CD4-positive, alpha-beta memory T cell (primary cell): ENCODE measurements at regions of chr17 and their contacts with region 1.

Region 1: GRCh38 chr17:18960803-18961511 is 9.0 kb downstream of the SLC5A10 start:
- DNase-seq: peak; percentile 45 to 64 (median 52)
- H3K4me3 ChIP-seq: no peak overlapping the region
- H3K4me3 Mint-ChIP-seq: peak overlapping the region in 1 of 8 donors; percentile 8
- H3K27ac ChIP-seq: no peak overlapping the region
- H3K27ac Mint-ChIP-seq: peak overlapping the region in 2 of 7 donors; percentile 8 to 24
- H3K4me1 ChIP-seq: peaks cover 23% of the 10 kb centered on the region
- H3K4me1 Mint-ChIP-seq: peaks cover 12 to 49% (median 19%) of the 10 kb centered on the region in 4 donors
- H3K27me3 ChIP-seq: no peaks in the 10 kb centered on the region
- H3K27me3 Mint-ChIP-seq: no peaks in the 10 kb centered on the region

Region 2: DNA sequence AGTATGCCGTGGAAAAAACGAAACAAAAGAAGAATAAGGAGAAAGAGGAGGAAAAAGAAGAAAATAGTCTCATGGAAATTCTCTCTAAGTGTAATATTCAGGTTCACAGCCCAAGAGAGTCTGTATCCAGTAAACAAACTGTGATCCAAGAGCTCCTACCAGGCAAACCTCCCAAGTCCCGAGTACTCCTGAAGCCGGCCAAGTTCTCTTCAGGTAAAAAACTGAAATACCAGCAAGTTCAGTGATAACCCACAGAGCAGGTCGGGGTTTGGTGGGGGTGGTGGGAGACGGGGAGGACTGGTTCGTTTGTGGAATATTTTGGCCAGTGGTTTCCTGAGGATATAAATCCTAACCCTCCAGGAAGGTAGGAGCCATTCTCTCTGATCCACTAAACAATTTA is 188.5 kb before region 1 on chr17:
- CTCF ChIA-PET with region 1: no interaction called
- POLR2A ChIA-PET with region 1: no interaction called
- intact Hi-C with region 1: no loop called
- DNase-seq: no peak
- H3K4me3 ChIP-seq: no peak overlapping the region
- H3K4me3 Mint-ChIP-seq: no peak overlapping the region
- H3K27ac ChIP-seq: no peak overlapping the region
- H3K27ac Mint-ChIP-seq: no peak overlapping the region
- H3K4me1 ChIP-seq: no peaks in the 10 kb centered on the region
- H3K4me1 Mint-ChIP-seq: no peaks in the 10 kb centered on the region
- H3K27me3 ChIP-seq: no peaks in the 10 kb centered on the region
- H3K27me3 Mint-ChIP-seq: peaks cover 2 to 4% of the 10 kb centered on the region in 2 donors

Region 3: DNA sequence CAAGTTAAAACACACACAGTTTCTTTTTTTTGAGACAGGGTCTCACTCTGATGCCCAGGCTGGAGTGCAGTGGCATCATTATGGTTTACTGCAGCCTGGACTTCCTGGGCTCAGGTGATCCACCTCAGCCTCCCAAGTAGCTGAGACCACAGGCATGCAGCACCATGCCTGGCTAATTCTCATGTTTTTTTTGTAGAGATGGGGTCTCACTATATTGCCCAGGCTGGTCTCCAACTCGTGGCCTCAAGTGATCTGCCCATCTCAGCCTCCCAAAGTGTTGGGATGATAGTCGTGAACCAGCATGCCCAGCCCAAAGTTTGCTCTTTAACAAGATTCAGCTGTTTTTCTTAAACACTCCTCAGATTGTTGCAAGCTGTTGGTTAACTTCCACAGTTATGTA is 64.0 kb before region 1 on chr17:
- CTCF ChIA-PET with region 1: interaction called, 11 read pairs
- POLR2A ChIA-PET with region 1: interaction called, 4 read pairs
- intact Hi-C with region 1: loop called (anchors 5 kb)
- DNase-seq: no peak
- H3K4me3 ChIP-seq: no peak overlapping the region
- H3K4me3 Mint-ChIP-seq: no peak overlapping the region
- H3K27ac ChIP-seq: no peak overlapping the region
- H3K27ac Mint-ChIP-seq: peak overlapping the region in 1 of 7 donors; percentile 55
- H3K4me1 ChIP-seq: peaks cover 28% of the 10 kb centered on the region
- H3K4me1 Mint-ChIP-seq: peaks cover 20 to 52% (median 27%) of the 10 kb centered on the region in 4 donors
- H3K27me3 ChIP-seq: no peaks in the 10 kb centered on the region
- H3K27me3 Mint-ChIP-seq: no peaks in the 10 kb centered on the region

Region 4: DNA sequence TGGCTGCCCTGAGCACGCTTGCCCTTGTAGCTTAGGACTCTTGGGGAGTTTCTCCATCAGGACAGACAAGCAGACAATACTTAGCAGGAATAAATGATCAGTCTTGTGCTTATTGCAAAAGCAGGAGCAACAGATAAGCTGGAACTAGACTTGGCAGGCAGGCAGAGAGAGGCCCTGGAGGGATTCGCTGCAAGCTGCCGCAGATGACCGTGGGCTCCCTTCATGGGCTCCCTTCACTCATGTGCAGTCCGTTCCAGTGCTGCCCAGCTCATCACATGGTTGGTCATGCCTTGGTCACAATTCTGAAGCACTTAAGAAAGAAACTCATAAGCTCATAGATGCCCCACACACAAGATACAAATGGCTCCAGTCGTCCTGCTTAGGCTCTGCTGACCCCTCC is 11.4 kb before region 1 on chr17:
- CTCF ChIA-PET with region 1: interaction called, 29 read pairs
- POLR2A ChIA-PET with region 1: no interaction called
- intact Hi-C with region 1: no loop called
- DNase-seq: no peak
- H3K4me3 ChIP-seq: no peak overlapping the region
- H3K4me3 Mint-ChIP-seq: no peak overlapping the region
- H3K27ac ChIP-seq: no peak overlapping the region
- H3K27ac Mint-ChIP-seq: no peak overlapping the region
- H3K4me1 ChIP-seq: peaks cover 10% of the 10 kb centered on the region
- H3K4me1 Mint-ChIP-seq: peaks cover 11 to 20% (median 17%) of the 10 kb centered on the region in 4 donors
- H3K27me3 ChIP-seq: no peaks in the 10 kb centered on the region
- H3K27me3 Mint-ChIP-seq: peaks cover 0 to 2% of the 10 kb centered on the region in 2 donors

Region 5: DNA sequence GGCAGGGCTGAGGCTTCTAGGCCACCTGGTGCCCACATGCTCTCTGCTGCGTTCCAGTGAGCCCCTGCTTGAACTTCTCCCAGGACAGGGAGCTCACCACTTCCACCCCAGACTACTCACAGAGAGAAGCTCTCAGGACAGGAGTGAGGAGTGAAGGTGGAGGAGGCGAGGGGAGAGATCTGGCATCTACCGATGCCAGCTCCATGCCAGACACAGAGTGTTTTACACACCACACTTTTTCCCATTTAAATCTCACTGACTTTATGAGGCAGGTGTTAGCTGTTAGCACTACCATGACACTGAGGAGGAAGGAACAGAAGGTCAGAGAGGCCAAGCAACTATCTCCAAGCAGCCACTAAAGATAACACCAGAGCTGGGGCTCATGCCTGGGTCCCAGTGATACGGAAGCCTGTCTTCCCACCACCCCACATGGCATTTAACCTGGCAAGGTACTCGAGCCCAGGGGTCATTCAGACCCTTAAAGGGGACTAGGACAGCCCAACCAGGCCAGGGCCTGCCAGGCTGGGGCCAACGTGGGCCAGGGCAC is 36.8 kb after region 1 on chr17:
- CTCF ChIA-PET with region 1: interaction called, 35 read pairs
- POLR2A ChIA-PET with region 1: interaction called, 3 read pairs
- intact Hi-C with region 1: no loop called
- DNase-seq: no peak
- H3K4me3 ChIP-seq: no peak overlapping the region
- H3K4me3 Mint-ChIP-seq: no peak overlapping the region
- H3K27ac ChIP-seq: no peak overlapping the region
- H3K27ac Mint-ChIP-seq: peak overlapping the region in 1 of 7 donors; percentile 13
- H3K4me1 ChIP-seq: peaks cover 37% of the 10 kb centered on the region
- H3K4me1 Mint-ChIP-seq: peaks cover 26 to 55% (median 36%) of the 10 kb centered on the region in 4 donors
- H3K27me3 ChIP-seq: no peaks in the 10 kb centered on the region
- H3K27me3 Mint-ChIP-seq: no peaks in the 10 kb centered on the region

Region 6: DNA sequence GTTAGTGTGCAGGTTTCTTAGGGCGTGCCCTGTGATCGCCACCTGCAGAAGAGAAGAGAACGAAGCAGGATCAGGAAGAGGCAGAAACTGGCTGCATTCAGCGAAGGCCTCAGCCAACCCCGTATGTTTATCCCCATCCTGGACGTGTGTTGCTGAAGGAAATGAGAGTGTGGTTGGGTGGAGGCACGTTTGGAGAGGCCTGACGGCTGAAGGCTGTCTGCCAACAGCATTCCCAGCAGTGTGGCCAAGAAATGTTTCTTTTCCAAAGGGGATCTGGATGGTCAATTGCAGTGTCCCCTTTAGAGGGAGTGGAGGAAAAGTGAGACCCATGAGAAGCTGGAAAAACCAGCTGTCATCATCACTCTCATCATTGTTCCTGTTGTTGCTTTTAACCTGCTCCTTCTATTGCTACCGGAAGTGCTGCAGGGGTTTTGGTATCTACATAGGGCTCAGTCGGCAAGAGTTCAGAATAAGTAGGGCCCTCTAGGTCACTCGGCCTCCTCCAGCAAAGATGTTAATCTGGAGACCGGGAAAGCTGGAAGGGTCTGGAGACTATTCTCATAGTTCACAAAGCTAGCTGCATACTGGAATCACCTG is 526.2 kb after region 1 on chr17:
- CTCF ChIA-PET with region 1: no interaction called
- POLR2A ChIA-PET with region 1: no interaction called
- intact Hi-C with region 1: no loop called
- DNase-seq: no peak
- H3K4me3 ChIP-seq: no peak overlapping the region
- H3K4me3 Mint-ChIP-seq: no peak overlapping the region
- H3K27ac ChIP-seq: no peak overlapping the region
- H3K27ac Mint-ChIP-seq: no peak overlapping the region
- H3K4me1 ChIP-seq: no peaks in the 10 kb centered on the region
- H3K4me1 Mint-ChIP-seq: no peaks in the 10 kb centered on the region
- H3K27me3 ChIP-seq: no peaks in the 10 kb centered on the region
- H3K27me3 Mint-ChIP-seq: peaks cover 2% of the 10 kb centered on the region in 2 donors